ENCODE measurements at regions of chr11 and their contacts with region 1.

Region 1: GRCh38 chr11:3849297-3849874 is 6.1 kb upstream of the STIM1 start:
- DNase-seq: peak in 5 of 9 experiments; percentile 24 to 80 (median 60)
- ATAC-seq: peak; percentile 58
- H3K4me3 ChIP-seq: no peak overlapping the region
- H3K4me3 Mint-ChIP-seq: no peak overlapping the region
- H3K27ac ChIP-seq: no peak overlapping the region
- H3K27ac Mint-ChIP-seq: no peak overlapping the region
- H3K4me1 ChIP-seq: peaks cover 23% of the 10 kb centered on the region
- H3K4me1 Mint-ChIP-seq: peaks cover 35% of the 10 kb centered on the region
- H3K27me3 ChIP-seq: no peaks in the 10 kb centered on the region
- H3K27me3 Mint-ChIP-seq: no peaks in the 10 kb centered on the region
- CTCF ChIP-seq: peak; percentile 82

Region 2: GRCh38 chr11:3807909-3808860 is 41.2 kb before region 1 on chr11 and contains the start of gene PGAP2:
- CTCF ChIA-PET with region 1: interaction called, 12 read pairs
- POLR2A ChIA-PET with region 1: interaction called, 4 read pairs
- intact Hi-C with region 1: no loop called
- DNase-seq: peak; percentile 28 to 76 (median 60)
- ATAC-seq: peak; percentile 71
- H3K4me3 ChIP-seq: peak within 1 kb of the TSS; percentile 71 to 98
- H3K4me3 Mint-ChIP-seq: peak within 1 kb of the TSS; percentile 97
- H3K27ac ChIP-seq: peak within 1 kb of the TSS; percentile 49 to 62
- H3K27ac Mint-ChIP-seq: peak within 1 kb of the TSS; percentile 91
- H3K4me1 ChIP-seq: peaks cover 5% of the 10 kb centered on the region
- H3K4me1 Mint-ChIP-seq: peaks cover 15% of the 10 kb centered on the region
- H3K27me3 ChIP-seq: no peaks in the 10 kb centered on the region
- H3K27me3 Mint-ChIP-seq: no peaks in the 10 kb centered on the region
- CTCF ChIP-seq: peak; percentile 59
- total RNA-seq, gene PGAP2: 16.3 to 18.5 TPM

Region 3: GRCh38 chr11:3867209-3868091 is 18.1 kb after region 1 on chr11:
- CTCF ChIA-PET with region 1: interaction called, 63 read pairs
- POLR2A ChIA-PET with region 1: interaction called, 38 read pairs
- intact Hi-C with region 1: no loop called
- DNase-seq: peak in 1 of 9 experiments; percentile 39
- ATAC-seq: peak; percentile 46
- H3K4me3 ChIP-seq: no peak overlapping the region
- H3K4me3 Mint-ChIP-seq: peak overlapping the region; percentile 71
- H3K27ac ChIP-seq: peak overlapping the region in 1 of 2 experiments; percentile 66
- H3K27ac Mint-ChIP-seq: peak overlapping the region; percentile 80
- H3K4me1 ChIP-seq: peaks cover 90% of the 10 kb centered on the region
- H3K4me1 Mint-ChIP-seq: peaks cover 86% of the 10 kb centered on the region
- H3K27me3 ChIP-seq: no peaks in the 10 kb centered on the region
- H3K27me3 Mint-ChIP-seq: no peaks in the 10 kb centered on the region
- CTCF ChIP-seq: no peak

Region 4: GRCh38 chr11:3927133-3927796 is 77.9 kb after region 1 on chr11:
- CTCF ChIA-PET with region 1: interaction called, 15 read pairs
- POLR2A ChIA-PET with region 1: interaction called, 4 read pairs
- intact Hi-C with region 1: no loop called
- DNase-seq: no peak
- ATAC-seq: no peak
- H3K4me3 ChIP-seq: no peak overlapping the region
- H3K4me3 Mint-ChIP-seq: no peak overlapping the region
- H3K27ac ChIP-seq: no peak overlapping the region
- H3K27ac Mint-ChIP-seq: peak overlapping the region; percentile 1
- H3K4me1 ChIP-seq: peaks cover 19% of the 10 kb centered on the region
- H3K4me1 Mint-ChIP-seq: peaks cover 60% of the 10 kb centered on the region
- H3K27me3 ChIP-seq: no peaks in the 10 kb centered on the region
- H3K27me3 Mint-ChIP-seq: no peaks in the 10 kb centered on the region
- CTCF ChIP-seq: no peak

Region 5: GRCh38 chr11:3947061-3947460 is 97.7 kb after region 1 on chr11:
- CTCF ChIA-PET with region 1: interaction called, 36 read pairs
- POLR2A ChIA-PET with region 1: interaction called, 32 read pairs
- intact Hi-C with region 1: loop called in 1 of 2 experiments (anchors 2 kb)
- DNase-seq: peak; percentile 23 to 90 (median 62)
- ATAC-seq: peak; percentile 72
- H3K4me3 ChIP-seq: peak overlapping the region; percentile 32 to 35
- H3K4me3 Mint-ChIP-seq: peak overlapping the region; percentile 75
- H3K27ac ChIP-seq: peak overlapping the region; percentile 68 to 86
- H3K27ac Mint-ChIP-seq: peak overlapping the region; percentile 95
- H3K4me1 ChIP-seq: peaks cover 95% of the 10 kb centered on the region
- H3K4me1 Mint-ChIP-seq: peaks cover 95% of the 10 kb centered on the region
- H3K27me3 ChIP-seq: no peaks in the 10 kb centered on the region
- H3K27me3 Mint-ChIP-seq: no peaks in the 10 kb centered on the region
- CTCF ChIP-seq: no peak

Region 6: GRCh38 chr11:4044976-4045646 is 195.7 kb after region 1 on chr11:
- CTCF ChIA-PET with region 1: interaction called, 20 read pairs
- POLR2A ChIA-PET with region 1: interaction called, 3 read pairs
- intact Hi-C with region 1: no loop called
- DNase-seq: no peak
- ATAC-seq: no peak
- H3K4me3 ChIP-seq: no peak overlapping the region
- H3K4me3 Mint-ChIP-seq: no peak overlapping the region
- H3K27ac ChIP-seq: no peak overlapping the region
- H3K27ac Mint-ChIP-seq: peak overlapping the region; percentile 70
- H3K4me1 ChIP-seq: peaks cover 8% of the 10 kb centered on the region
- H3K4me1 Mint-ChIP-seq: peaks cover 45% of the 10 kb centered on the region
- H3K27me3 ChIP-seq: no peaks in the 10 kb centered on the region
- H3K27me3 Mint-ChIP-seq: no peaks in the 10 kb centered on the region
- CTCF ChIP-seq: no peak

Measured in CD8-positive, alpha-beta T cell (primary cell).